ENCODE measurements at regions of chr11 and their contacts with region 1.

Region 1: GRCh38 chr11:114080219-114080618 is 20.7 kb downstream of the ZBTB16 start:
- DNase-seq: no peak
- H3K4me3 ChIP-seq: no peak overlapping the region
- H3K27ac ChIP-seq: peak overlapping the region in 7 of 8 donors; percentile 28 to 79 (median 51)
- H3K4me1 ChIP-seq: peaks cover 54 to 100% (median 92%) of the 10 kb centered on the region in 6 donors
- H3K27me3 ChIP-seq: peaks cover 0 to 15% (median 0%) of the 10 kb centered on the region in 7 donors
- CTCF ChIP-seq: no peak
- POLR2A ChIP-seq: no peak

Region 2: GRCh38 chr11:114017723-114018122 is 62.5 kb before region 1 on chr11:
- intact Hi-C with region 1: no loop called
- DNase-seq: no peak
- H3K4me3 ChIP-seq: no peak overlapping the region
- H3K27ac ChIP-seq: no peak overlapping the region
- H3K4me1 ChIP-seq: no peaks in the 10 kb centered on the region
- H3K27me3 ChIP-seq: peaks cover 0 to 4% (median 0%) of the 10 kb centered on the region in 7 donors
- CTCF ChIP-seq: no peak
- POLR2A ChIP-seq: no peak

Region 3: GRCh38 chr11:114135737-114136151 is 55.5 kb after region 1 on chr11:
- intact Hi-C with region 1: loop called (anchors 10 kb)
- DNase-seq: no peak
- H3K4me3 ChIP-seq: peak overlapping the region in 1 of 8 donors; percentile 24
- H3K27ac ChIP-seq: peak overlapping the region in 5 of 8 donors; percentile 28 to 85 (median 80)
- H3K4me1 ChIP-seq: peaks cover 32 to 100% (median 76%) of the 10 kb centered on the region in 6 donors
- H3K27me3 ChIP-seq: no peaks in the 10 kb centered on the region
- CTCF ChIP-seq: no peak
- POLR2A ChIP-seq: no peak

Measured in spleen (tissue), 13 donors.